Naive thymus-derived CD4-positive, alpha-beta T cell (primary cell): ENCODE measurements at regions of chr17 and their contacts with region 1.

Region 1: GRCh38 chr17:28726226-28727130 is at the start of gene TLCD1:
- DNase-seq: peak; percentile 79 to 93 (median 87)
- ATAC-seq: peak; percentile 65
- H3K4me3 ChIP-seq: peak within 1 kb of the TSS; percentile 83
- H3K4me3 Mint-ChIP-seq: peak within 1 kb of the TSS; percentile 82 to 98 (median 96)
- H3K27ac ChIP-seq: peak within 1 kb of the TSS; percentile 100
- H3K27ac Mint-ChIP-seq: peak within 1 kb of the TSS; percentile 93 to 100 (median 98)
- H3K4me1 ChIP-seq: peaks cover 27 to 37% of the 10 kb centered on the region in 2 donors
- H3K4me1 Mint-ChIP-seq: peaks cover 12 to 63% (median 52%) of the 10 kb centered on the region in 7 donors
- H3K27me3 ChIP-seq: no peaks in the 10 kb centered on the region
- H3K27me3 Mint-ChIP-seq: no peaks in the 10 kb centered on the region
- total RNA-seq, gene TLCD1: 0.69 to 3.0 (median 0.79) TPM in 3 of 5 experiments, not detected in the others

Region 2: GRCh38 chr17:28710861-28711722 is 15.4 kb before region 1 on chr17:
- CTCF ChIA-PET with region 1: interaction called, 15 read pairs
- POLR2A ChIA-PET with region 1: interaction called, 59 read pairs
- intact Hi-C with region 1: loop called in 1 of 2 experiments (anchors 1 kb)
- DNase-seq: peak; percentile 71 to 97 (median 85)
- ATAC-seq: peak; percentile 95
- H3K4me3 ChIP-seq: peak overlapping the region; percentile 95
- H3K4me3 Mint-ChIP-seq: peak overlapping the region; percentile 76 to 94 (median 92)
- H3K27ac ChIP-seq: peak overlapping the region; percentile 83
- H3K27ac Mint-ChIP-seq: peak overlapping the region; percentile 85 to 98 (median 93)
- H3K4me1 ChIP-seq: peaks cover 9 to 12% of the 10 kb centered on the region in 2 donors
- H3K4me1 Mint-ChIP-seq: peaks cover 12 to 29% (median 19%) of the 10 kb centered on the region in 7 donors
- H3K27me3 ChIP-seq: no peaks in the 10 kb centered on the region
- H3K27me3 Mint-ChIP-seq: peaks cover 0 to 14% (median 6%) of the 10 kb centered on the region in 5 donors

Region 3: GRCh38 chr17:28763804-28764266 is 37.4 kb after region 1 on chr17:
- CTCF ChIA-PET with region 1: interaction called, 32 read pairs
- POLR2A ChIA-PET with region 1: interaction called, 15 read pairs
- intact Hi-C with region 1: loop called in 1 of 2 experiments (anchors 1 kb)
- DNase-seq: peak in 8 of 9 donors; percentile 63 to 82 (median 76)
- ATAC-seq: peak; percentile 95
- H3K4me3 ChIP-seq: no peak overlapping the region
- H3K4me3 Mint-ChIP-seq: no peak overlapping the region
- H3K27ac ChIP-seq: no peak overlapping the region
- H3K27ac Mint-ChIP-seq: peak overlapping the region in 5 of 9 donors; percentile 6 to 93 (median 75)
- H3K4me1 ChIP-seq: no peaks in the 10 kb centered on the region
- H3K4me1 Mint-ChIP-seq: peaks cover 4 to 16% (median 6%) of the 10 kb centered on the region in 7 donors
- H3K27me3 ChIP-seq: no peaks in the 10 kb centered on the region
- H3K27me3 Mint-ChIP-seq: no peaks in the 10 kb centered on the region

Region 4: DNA sequence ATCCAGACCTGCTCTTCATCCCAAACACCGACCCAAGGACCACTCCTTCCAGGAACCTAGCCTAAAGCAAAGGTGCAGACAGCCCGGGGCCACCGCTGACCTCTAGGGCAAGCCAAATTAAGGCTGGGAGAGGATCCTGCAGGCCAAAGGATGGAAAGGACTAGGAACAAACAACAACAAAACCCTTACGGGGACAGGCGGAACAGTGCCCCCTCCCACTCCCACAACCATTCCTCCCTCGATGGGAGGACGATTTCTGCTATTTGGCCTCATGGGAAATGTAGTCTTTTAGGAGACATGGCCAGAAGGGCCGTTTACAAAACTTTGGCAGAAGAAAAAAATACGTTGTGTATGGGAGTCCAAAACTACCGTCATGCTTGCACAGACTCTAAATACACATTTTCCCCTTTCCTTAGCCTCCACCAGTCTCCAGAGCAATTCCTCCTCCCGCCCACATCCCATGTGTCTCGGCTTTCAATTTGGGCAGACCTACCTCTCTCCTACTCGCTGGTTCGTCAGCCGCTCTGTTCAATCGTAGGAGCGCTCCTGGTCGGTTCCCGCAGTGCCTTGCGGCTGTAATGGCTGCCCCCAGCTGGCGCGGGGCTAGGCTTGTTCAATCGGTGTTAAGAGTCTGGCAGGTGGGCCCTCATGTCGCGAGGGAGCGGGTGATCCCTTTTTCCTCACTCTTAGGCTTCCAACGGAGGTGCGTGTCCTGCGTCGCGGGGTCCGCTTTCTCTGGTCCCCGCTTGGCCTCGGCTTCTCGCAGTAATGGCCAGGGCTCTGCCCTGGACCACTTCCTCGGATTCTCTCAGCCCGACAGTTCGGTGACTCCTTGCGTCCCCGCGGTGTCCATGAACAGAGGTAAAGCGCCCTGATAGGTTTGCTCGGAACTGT is 128.2 kb after region 1 on chr17 and contains the start of gene ERAL1:
- CTCF ChIA-PET with region 1: interaction called, 5 read pairs
- POLR2A ChIA-PET with region 1: interaction called, 3 read pairs
- intact Hi-C with region 1: loop called (anchors 1 kb)
- DNase-seq: peak; percentile 63 to 87 (median 83)
- ATAC-seq: peak; percentile 100
- H3K4me3 ChIP-seq: peak within 1 kb of the TSS; percentile 86
- H3K4me3 Mint-ChIP-seq: peak within 1 kb of the TSS; percentile 90 to 100 (median 94)
- H3K27ac ChIP-seq: peak within 1 kb of the TSS; percentile 82
- H3K27ac Mint-ChIP-seq: peak within 1 kb of the TSS; percentile 85 to 94 (median 90)
- H3K4me1 ChIP-seq: peaks cover 7 to 12% of the 10 kb centered on the region in 2 donors
- H3K4me1 Mint-ChIP-seq: peaks cover 0 to 27% (median 11%) of the 10 kb centered on the region in 7 donors
- H3K27me3 ChIP-seq: no peaks in the 10 kb centered on the region
- H3K27me3 Mint-ChIP-seq: no peaks in the 10 kb centered on the region
- total RNA-seq, gene ERAL1: 19.8 to 50.0 (median 24.9) TPM

Region 5: DNA sequence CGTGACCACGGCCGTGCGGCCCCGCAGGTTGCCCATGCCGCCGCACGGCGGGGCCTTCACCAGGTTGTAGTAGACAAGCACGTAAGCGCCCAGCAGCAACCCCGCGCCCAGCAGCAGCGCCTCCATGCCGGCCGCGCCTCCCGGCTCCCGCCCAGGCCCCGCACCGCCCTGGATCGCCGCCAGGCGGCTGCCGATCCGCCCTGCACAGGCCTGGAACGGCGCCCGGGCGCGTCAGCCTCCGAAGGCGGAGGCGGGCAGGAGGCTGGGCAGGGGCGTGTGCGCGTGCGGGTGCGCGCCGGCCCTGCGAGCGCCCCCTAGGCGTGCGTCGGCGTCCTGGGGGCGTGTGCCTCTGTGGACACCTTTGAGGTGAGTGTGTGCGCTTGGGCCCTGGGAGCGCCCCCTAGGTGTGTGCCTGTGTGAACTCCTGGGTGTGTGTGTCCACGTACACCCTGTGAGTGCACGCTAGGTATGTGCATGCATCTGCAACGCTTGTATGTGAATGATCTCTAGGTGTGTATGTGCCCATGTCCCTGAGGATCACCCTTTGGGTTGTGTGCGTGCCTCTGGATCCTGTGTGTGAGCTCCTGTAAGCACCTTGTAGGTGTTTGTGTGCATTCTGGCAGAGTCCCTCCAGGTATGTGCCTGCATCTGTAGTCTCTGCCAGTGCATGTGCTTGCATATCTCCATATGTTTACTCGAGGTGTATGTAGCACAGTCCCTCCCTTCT is 176.5 kb after region 1 on chr17 and contains the start of gene DHRS13:
- CTCF ChIA-PET with region 1: interaction called, 7 read pairs
- POLR2A ChIA-PET with region 1: interaction called, 35 read pairs
- intact Hi-C with region 1: loop called (anchors 1 kb)
- DNase-seq: peak; percentile 92 to 99 (median 96)
- ATAC-seq: peak; percentile 96
- H3K4me3 ChIP-seq: peak within 1 kb of the TSS; percentile 77
- H3K4me3 Mint-ChIP-seq: peak within 1 kb of the TSS; percentile 85 to 98 (median 94)
- H3K27ac ChIP-seq: peak within 1 kb of the TSS; percentile 87
- H3K27ac Mint-ChIP-seq: peak within 1 kb of the TSS; percentile 81 to 96 (median 90)
- H3K4me1 ChIP-seq: peaks cover 18 to 29% of the 10 kb centered on the region in 2 donors
- H3K4me1 Mint-ChIP-seq: peaks cover 13 to 53% (median 36%) of the 10 kb centered on the region in 7 donors
- H3K27me3 ChIP-seq: no peaks in the 10 kb centered on the region
- H3K27me3 Mint-ChIP-seq: no peaks in the 10 kb centered on the region
- total RNA-seq, gene DHRS13: 20.0 to 51.3 (median 30.4) TPM

Region 6: GRCh38 chr17:29111816-29112499 is 385.5 kb after region 1 on chr17:
- CTCF ChIA-PET with region 1: interaction called, 16 read pairs
- POLR2A ChIA-PET with region 1: no interaction called
- intact Hi-C with region 1: loop called (anchors 1 kb)
- DNase-seq: peak; percentile 33 to 77 (median 58)
- ATAC-seq: peak; percentile 75
- H3K4me3 ChIP-seq: no peak overlapping the region
- H3K4me3 Mint-ChIP-seq: no peak overlapping the region
- H3K27ac ChIP-seq: no peak overlapping the region
- H3K27ac Mint-ChIP-seq: no peak overlapping the region
- H3K4me1 ChIP-seq: no peaks in the 10 kb centered on the region
- H3K4me1 Mint-ChIP-seq: peaks cover 0 to 10% (median 5%) of the 10 kb centered on the region in 7 donors
- H3K27me3 ChIP-seq: no peaks in the 10 kb centered on the region
- H3K27me3 Mint-ChIP-seq: no peaks in the 10 kb centered on the region

Region 7: DNA sequence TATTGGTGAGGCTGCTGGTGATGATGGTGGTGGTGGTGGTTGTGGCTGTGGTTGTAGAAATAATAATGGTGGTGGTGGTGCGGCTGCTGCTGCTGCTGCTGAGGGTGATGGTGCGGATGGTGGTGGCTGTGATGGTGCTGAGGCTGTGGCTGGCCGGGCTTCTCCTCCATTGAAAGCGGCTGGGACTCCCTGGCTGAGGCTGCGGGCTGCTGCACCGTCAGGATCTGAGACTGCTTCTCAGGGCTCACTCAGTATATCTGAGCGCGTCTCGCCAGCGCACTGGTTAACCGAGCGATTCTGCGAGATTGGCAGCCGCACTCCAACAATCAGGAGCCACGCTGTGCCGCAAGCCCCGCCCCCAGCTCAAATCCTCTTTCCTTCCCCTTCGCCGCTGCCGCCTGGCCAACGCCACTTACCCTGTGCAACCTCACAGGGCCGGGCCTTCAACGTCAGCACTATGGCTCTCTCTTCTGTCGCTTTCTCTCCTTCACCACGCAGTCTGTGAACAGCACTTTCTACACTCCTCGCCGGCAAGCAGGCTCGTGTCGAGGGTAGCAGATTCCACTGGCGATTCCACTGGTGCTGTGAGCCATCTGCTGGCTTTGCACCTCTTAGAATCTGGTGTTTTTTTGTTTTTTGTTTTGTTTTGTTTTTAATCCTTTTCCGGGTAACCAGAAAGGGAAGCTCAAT is 567.6 kb after region 1 on chr17 and contains the start of gene NUFIP2:
- CTCF ChIA-PET with region 1: no interaction called
- POLR2A ChIA-PET with region 1: no interaction called
- intact Hi-C with region 1: loop called in 1 of 2 experiments (anchors 5 kb)
- DNase-seq: peak; percentile 93 to 99 (median 98)
- ATAC-seq: peak; percentile 93
- H3K4me3 ChIP-seq: peak within 1 kb of the TSS; percentile 98
- H3K4me3 Mint-ChIP-seq: peak within 1 kb of the TSS; percentile 99 to 100 (median 100)
- H3K27ac ChIP-seq: peak within 1 kb of the TSS; percentile 90
- H3K27ac Mint-ChIP-seq: peak within 1 kb of the TSS; percentile 97 to 100 (median 99)
- H3K4me1 ChIP-seq: peaks cover 28 to 36% of the 10 kb centered on the region in 2 donors
- H3K4me1 Mint-ChIP-seq: peaks cover 26 to 45% (median 41%) of the 10 kb centered on the region in 7 donors
- H3K27me3 ChIP-seq: no peaks in the 10 kb centered on the region
- H3K27me3 Mint-ChIP-seq: peaks cover 0 to 4% (median 0%) of the 10 kb centered on the region in 5 donors
- total RNA-seq, gene NUFIP2: 60.4 to 85.3 (median 73.0) TPM